ENCODE measurements at regions of chr12 and their contacts with region 1.

Region 1: GRCh38 chr12:52213512-52214420 is 19.3 kb upstream of the KRT7 start:
- DNase-seq: peak; percentile 84 to 97 (median 94)
- ATAC-seq: peak; percentile 83 to 90 (median 89)
- H3K4me3 ChIP-seq: no peak overlapping the region
- H3K27ac ChIP-seq: peak overlapping the region in 1 of 4 donors; percentile 8
- H3K4me1 ChIP-seq: peaks cover 17 to 32% (median 19%) of the 10 kb centered on the region in 3 donors
- H3K27me3 ChIP-seq: no peaks in the 10 kb centered on the region
- CTCF ChIP-seq: peak; percentile 97 to 99 (median 98)

Region 2: GRCh38 chr12:52167954-52168717 is 45.6 kb before region 1 on chr12:
- intact Hi-C with region 1: loop called in 1 of 3 experiments (anchors 5 kb)
- DNase-seq: peak in 1 of 6 donors; percentile 13
- ATAC-seq: peak in 2 of 4 donors; percentile 47 to 53
- H3K4me3 ChIP-seq: no peak overlapping the region
- H3K27ac ChIP-seq: no peak overlapping the region
- H3K4me1 ChIP-seq: peaks cover 0 to 5% (median 3%) of the 10 kb centered on the region in 3 donors
- H3K27me3 ChIP-seq: no peaks in the 10 kb centered on the region
- CTCF ChIP-seq: no peak

Region 3: GRCh38 chr12:52178984-52179383 is 34.8 kb before region 1 on chr12:
- intact Hi-C with region 1: no loop called
- DNase-seq: peak in 1 of 6 donors; percentile 32
- ATAC-seq: no peak
- H3K4me3 ChIP-seq: no peak overlapping the region
- H3K27ac ChIP-seq: no peak overlapping the region
- H3K4me1 ChIP-seq: no peaks in the 10 kb centered on the region
- H3K27me3 ChIP-seq: no peaks in the 10 kb centered on the region
- CTCF ChIP-seq: no peak

Region 4: DNA sequence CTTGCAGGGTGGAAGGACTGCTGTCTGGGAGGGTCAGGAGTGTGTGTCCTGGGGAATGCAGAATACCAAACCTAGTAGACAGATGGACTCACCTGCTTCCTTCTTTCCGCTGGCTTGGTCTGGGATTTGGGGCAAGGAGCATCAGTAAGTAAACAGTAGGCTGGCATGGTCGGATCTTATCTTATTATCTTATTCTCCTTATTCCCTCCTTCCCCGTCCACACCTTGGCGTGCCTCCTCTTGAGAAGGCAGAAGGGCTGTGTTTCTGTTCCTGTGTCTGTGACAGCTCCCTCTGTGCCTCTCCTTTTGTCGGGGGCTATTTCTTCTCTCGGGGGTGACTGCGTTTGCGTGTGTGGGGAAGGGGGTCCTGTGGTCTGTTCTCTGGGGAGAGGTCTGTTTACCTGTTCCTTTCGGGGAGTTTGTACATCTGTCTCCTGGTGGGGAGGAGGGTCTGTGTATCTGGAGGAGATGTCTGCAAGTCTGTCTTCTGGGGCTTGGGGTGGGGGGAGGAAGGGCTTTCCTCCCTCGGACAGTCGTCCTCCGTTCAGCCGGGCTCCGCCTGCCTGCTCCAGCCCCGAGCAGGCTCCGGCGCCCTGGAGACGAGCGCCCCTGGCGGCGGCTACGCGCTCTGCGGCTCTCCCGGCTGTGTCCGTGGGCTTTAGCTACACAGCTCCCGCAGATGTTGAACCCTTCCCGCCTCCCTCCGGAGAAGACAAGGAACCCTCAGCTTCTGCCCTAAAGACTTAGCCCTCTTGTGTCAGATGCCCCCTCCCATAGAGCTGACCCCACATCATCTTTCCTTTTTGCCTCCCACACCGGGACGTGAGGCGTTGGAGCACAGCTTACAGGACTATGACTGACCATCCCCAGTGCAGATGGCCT is 65.0 kb after region 1 on chr12:
- intact Hi-C with region 1: loop called in 1 of 3 experiments (anchors 10 kb)
- DNase-seq: peak; percentile 71 to 98 (median 89)
- ATAC-seq: peak; percentile 90 to 95 (median 92)
- H3K4me3 ChIP-seq: peak overlapping the region in 2 of 4 donors; percentile 12 to 24
- H3K27ac ChIP-seq: peak overlapping the region in 3 of 4 donors; percentile 60 to 77 (median 74)
- H3K4me1 ChIP-seq: peaks cover 0 to 20% (median 4%) of the 10 kb centered on the region in 3 donors
- H3K27me3 ChIP-seq: no peaks in the 10 kb centered on the region
- CTCF ChIP-seq: peak; percentile 96 to 98 (median 96)

Measured in pancreas (tissue), 10 donors.